Activated naive CD4-positive, alpha-beta T cell treated with anti-CD3 and anti-CD28 coated beads for 36 hours (primary cell): ENCODE measurements at regions of chr3 and their contacts with region 1.

Region 1: GRCh38 chr3:127672516-127673190 is at the start of gene ABTB1:
- DNase-seq: peak; percentile 89
- H3K4me3 Mint-ChIP-seq: peak within 1 kb of the TSS; percentile 86
- H3K27ac Mint-ChIP-seq: peak within 1 kb of the TSS; percentile 87
- H3K4me1 Mint-ChIP-seq: peaks cover 21% of the 10 kb centered on the region
- H3K27me3 Mint-ChIP-seq: no peaks in the 10 kb centered on the region
- total RNA-seq, gene ABTB1: 10.6 to 13.5 TPM

Region 2: DNA sequence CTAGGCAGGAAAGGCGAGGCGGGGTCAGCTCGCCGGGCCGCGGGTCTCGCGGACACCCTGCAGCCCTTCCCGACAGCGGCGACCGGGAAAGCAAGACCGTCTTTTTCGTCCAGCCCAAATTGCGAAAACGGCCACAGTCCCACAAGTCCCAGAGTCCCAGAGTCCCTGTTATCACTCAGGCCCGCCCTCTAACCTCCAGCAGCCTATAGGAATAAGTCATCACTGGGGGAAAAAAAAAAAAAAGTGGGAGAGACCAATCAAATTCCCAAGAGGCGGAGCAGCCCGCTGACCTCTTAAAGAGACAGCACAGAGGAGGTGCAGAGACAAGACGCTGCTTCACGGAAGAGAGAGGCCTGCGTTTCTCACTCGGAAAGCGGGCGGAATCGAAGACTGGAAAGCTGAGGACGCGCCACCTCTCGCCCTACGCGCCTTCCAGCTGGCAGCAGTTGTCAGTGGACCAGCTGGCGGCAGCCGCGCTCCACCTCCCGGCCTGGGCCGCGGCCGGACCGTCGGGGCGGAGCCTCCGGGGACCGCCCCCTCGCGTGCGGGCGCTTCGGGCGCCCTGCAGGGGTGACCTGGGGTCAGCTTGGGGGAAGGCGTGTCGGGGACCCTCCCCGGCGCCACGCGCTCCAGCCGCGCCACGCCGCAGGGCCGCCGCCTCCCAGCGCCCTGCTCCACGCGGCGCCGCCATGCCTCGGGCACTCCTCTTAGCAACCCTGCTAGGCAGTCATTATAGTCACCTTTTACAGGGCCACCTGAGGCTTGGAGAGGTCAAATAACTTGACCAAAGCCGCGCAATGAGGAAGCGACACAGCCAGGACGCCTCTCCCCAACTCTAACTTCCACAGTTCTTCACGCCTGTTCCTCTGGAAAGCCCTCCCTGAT is 81.8 kb before region 1 on chr3 and contains the start of gene TPRA1:
- CTCF ChIA-PET with region 1: no interaction called
- intact Hi-C with region 1: loop called (anchors 1 kb)
- DNase-seq: peak; percentile 84
- H3K4me3 Mint-ChIP-seq: peak within 1 kb of the TSS; percentile 93
- H3K27ac Mint-ChIP-seq: peak within 1 kb of the TSS; percentile 92
- H3K4me1 Mint-ChIP-seq: peaks cover 32% of the 10 kb centered on the region
- H3K27me3 Mint-ChIP-seq: no peaks in the 10 kb centered on the region
- total RNA-seq, gene TPRA1: 15.1 to 15.9 TPM

Region 3: DNA sequence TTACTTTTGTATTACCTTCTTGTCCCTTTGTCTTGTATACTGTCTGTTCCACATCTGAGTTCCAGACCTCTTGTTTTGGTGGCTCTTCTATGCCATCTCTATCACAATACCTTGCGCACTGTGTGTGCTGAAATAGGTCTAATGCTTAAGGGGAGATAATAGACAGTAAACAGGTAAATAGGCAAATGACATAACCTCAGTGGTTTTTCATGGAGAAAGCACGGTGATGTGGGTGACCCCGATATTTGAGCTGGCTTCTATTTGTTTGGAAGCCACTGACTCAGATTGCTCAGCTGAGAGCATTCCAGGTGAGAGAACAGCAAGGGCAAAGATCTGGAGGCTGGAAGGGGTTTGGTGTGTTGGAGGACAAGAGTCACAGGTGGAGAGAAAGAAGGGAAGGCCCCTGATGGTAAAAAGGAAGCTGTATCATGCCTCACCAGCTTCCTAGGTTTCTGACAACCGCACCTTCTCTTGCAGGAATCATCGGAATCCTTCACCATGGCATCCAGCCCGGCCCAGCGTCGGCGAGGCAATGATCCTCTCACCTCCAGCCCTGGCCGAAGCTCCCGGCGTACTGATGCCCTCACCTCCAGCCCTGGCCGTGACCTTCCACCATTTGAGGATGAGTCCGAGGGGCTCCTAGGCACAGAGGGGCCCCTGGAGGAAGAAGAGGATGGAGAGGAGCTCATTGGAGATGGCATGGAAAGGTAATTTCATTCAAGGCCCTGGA is 73.6 kb before region 1 on chr3:
- CTCF ChIA-PET with region 1: interaction called, 3 read pairs
- intact Hi-C with region 1: loop called (anchors 1 kb)
- DNase-seq: no peak
- H3K4me3 Mint-ChIP-seq: peak overlapping the region; percentile 84
- H3K27ac Mint-ChIP-seq: peak overlapping the region; percentile 89
- H3K4me1 Mint-ChIP-seq: peaks cover 40% of the 10 kb centered on the region
- H3K27me3 Mint-ChIP-seq: no peaks in the 10 kb centered on the region

Region 4: DNA sequence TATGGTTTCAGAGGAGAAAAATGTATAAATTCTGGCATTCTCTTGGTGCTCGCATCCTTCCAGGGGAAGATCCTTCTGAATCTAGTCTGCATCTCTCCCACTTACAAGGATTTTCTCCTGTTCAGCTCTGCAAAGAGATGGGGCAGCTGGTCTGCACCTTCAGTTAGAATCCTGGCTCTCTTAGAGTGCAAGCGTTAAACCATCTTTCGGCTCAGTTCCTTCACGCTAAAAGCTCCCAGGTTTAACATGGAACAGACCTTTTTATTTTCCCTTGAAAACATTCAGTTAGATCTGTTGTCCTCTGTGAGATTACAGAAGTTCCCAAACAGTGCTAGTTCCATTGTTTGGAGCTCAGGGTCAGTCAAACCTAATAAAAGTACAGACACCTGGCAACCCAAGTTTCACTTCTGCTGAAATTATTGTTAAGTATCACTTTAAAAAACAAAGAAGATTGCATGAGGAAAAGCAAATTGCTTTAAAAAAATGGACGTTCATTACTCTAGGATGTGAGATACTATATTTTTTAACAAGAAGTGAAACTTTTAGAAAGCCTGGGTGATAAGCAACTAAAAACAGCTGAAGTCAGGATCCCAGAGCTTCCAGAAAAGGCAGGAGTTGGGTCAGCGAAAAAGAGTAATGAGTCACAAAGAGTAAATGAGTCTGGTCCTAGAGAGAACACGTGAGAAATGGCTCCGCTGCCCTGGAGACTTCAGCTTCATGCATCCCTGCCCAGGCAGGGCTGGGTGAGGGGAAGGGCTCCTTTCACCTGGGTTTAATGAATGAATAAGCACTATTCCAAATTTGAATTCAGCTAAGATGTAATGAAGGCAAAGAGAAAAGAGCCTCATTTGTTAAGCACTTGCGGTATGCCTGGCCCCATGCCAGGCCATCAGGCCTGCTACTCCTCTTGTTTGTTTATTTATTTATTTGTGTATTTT is 63.4 kb after region 1 on chr3:
- CTCF ChIA-PET with region 1: no interaction called
- intact Hi-C with region 1: no loop called
- DNase-seq: no peak
- H3K4me3 Mint-ChIP-seq: no peak overlapping the region
- H3K27ac Mint-ChIP-seq: no peak overlapping the region
- H3K4me1 Mint-ChIP-seq: no peaks in the 10 kb centered on the region
- H3K27me3 Mint-ChIP-seq: peaks cover 4% of the 10 kb centered on the region